Activated T-helper 1 cell treated with anti-CD3 and anti-CD28 coated beads, Interleukin-12 subunit alpha, Interleukin-12 subunit beta, Interleukin-2, Interleukin-4 antibody, amounts not matched to agents 30 ng/mL and 10 ng/mL and 1 ng/mL, durations not matched to agents 14 hours and 24 hours and 36 hours (primary cell): ENCODE measurements at regions of chr13 and their contacts with region 1.

Region 1: DNA sequence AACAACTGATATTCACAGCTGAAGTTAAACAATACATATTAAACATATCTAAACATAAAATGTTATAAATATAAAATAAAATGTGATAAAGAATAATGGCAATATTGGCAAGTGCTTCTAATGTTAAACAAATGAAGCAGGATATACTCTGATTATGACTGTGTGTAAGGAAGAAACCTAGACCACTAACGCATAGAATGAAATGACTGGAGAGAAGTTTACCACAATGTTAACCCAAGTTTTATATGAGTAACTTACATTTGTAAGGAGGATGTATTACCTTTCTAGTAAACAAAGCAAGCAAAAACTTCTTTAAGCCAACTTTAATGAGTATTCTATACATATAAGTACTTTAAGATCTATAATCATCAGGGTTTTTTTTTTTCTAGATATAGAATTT is 43.0 kb downstream of the RB1 start:
- DNase-seq: no peak
- H3K4me3 Mint-ChIP-seq: no peak overlapping the region
- H3K27ac Mint-ChIP-seq: no peak overlapping the region
- H3K4me1 Mint-ChIP-seq: peaks cover 26% of the 10 kb centered on the region
- H3K27me3 Mint-ChIP-seq: no peaks in the 10 kb centered on the region

Region 2: DNA sequence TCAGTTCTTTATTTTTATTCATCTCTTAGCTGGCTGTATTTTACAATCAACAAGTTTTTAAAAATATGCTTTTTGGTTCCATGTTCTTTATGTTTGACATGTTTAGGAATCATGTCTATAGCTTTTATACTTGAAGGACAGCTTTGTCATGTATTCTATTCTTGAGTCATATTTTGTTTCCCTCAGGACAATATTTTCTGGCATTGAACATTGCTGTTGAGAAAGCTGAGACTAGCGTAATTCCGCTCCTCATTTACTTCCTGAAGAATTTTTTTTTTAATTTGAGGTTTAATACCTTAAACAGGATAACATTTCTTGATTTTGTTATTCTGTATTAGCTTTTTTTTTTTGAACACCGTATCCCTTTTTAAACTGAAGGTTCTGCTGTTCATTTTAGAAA is 10.2 kb after region 1 on chr13:
- intact Hi-C with region 1: no loop called
- DNase-seq: no peak
- H3K4me3 Mint-ChIP-seq: no peak overlapping the region
- H3K27ac Mint-ChIP-seq: no peak overlapping the region
- H3K4me1 Mint-ChIP-seq: no peaks in the 10 kb centered on the region
- H3K27me3 Mint-ChIP-seq: no peaks in the 10 kb centered on the region

Region 3: DNA sequence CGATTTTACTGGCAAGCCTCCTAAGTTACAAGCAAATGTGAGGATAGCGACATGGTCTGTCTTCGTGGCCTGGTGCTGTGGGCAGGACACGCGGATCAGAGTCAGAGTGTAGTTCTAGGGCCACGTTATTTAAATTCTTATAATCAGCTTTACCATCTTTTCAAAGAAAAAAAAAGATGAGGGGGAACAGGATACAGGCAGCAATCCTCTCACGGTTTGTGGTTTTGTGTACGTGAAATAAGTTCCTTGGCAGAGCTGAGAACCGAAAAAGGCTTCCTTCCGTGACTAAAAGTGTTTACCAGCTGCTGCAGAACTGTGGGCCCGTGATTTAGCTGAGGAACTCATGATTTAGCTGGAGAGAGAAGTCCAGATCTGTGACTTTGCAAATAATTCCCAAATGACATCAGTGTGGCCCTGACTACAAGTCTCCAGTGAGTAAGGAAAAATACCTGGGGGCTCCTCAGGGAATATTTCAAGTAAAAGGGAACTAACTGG is 159.1 kb after region 1 on chr13:
- intact Hi-C with region 1: loop called (anchors 5 kb)
- DNase-seq: peak; percentile 57
- H3K4me3 Mint-ChIP-seq: peak overlapping the region; percentile 38
- H3K27ac Mint-ChIP-seq: peak overlapping the region; percentile 62
- H3K4me1 Mint-ChIP-seq: peaks cover 68% of the 10 kb centered on the region
- H3K27me3 Mint-ChIP-seq: peaks cover 4% of the 10 kb centered on the region